Right cardiac atrium (tissue), 5 donors: ENCODE measurements at regions of chr7 and their contacts with region 1.

Region 1: DNA sequence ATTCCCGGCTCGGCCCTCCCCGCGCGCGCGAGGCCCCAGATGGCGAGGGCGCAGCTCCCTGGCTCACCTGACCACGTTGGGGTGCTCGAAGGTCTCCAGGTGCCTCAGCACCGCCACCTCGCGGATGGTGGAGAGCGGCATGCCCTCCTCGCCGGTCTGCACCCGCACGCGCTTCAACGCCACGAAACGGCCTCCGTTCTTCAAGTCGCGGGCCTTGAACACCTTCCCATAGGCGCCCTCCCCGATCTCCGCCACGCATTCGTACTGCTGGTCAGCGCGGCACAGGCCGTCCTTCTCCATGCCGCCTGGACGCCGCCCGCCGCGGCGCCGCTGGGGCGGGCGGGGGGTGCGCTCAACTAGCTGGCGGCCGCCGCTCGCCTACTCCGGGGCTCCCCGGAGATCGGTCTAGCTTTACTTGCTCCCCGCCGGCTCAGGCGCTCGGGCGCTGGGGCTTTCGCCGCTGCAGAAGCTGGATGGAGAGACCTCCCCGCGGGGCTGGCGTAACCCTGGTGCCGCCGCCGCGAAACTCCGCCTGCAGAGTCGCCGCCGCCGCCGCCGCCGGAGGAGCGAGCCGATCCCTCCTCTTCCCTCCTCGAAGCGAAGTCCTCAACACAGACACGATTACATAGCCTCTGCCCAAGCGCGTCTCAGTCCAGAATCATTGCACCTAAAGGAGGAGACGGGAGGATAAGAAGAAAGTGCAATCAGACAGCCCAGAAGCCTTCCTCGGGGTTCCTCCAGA is 3.2 kb downstream of the CDK6 start:
- DNase-seq: peak; percentile 81 to 94 (median 94)
- ATAC-seq: peak; percentile 79 to 82
- H3K4me3 ChIP-seq: peak overlapping the region; percentile 60
- H3K27ac ChIP-seq: peak overlapping the region; percentile 90
- H3K4me1 ChIP-seq: no peaks in the 10 kb centered on the region
- H3K27me3 ChIP-seq: no peaks in the 10 kb centered on the region

Region 2: DNA sequence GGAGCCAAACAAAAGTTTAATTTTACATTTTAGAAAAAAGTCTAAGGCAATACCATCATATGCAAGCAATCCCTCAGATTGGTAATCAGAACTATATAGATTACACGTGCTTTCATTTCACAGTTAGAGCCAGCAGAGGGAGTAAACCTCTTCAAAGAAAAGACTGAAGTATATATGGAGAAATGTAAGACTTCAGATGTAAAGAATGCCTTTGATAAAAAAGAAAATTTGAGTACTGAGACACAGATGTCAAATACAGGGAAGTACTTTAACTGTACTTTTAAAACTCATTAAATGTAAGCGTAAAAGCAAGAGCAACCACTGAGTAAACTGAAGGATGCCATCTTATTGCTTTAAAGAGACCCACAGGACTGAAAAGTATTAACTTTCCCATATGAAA is 141.6 kb before region 1 on chr7:
- intact Hi-C with region 1: loop called (anchors 5 to 10 kb)
- DNase-seq: no peak
- ATAC-seq: no peak
- H3K4me3 ChIP-seq: no peak overlapping the region
- H3K27ac ChIP-seq: no peak overlapping the region
- H3K4me1 ChIP-seq: no peaks in the 10 kb centered on the region
- H3K27me3 ChIP-seq: no peaks in the 10 kb centered on the region

Region 3: GRCh38 chr7:92781117-92781720 is 52.0 kb before region 1 on chr7:
- intact Hi-C with region 1: loop called in 2 of 4 experiments (anchors 5 to 10 kb)
- DNase-seq: peak in 1 of 3 donors; percentile 63
- ATAC-seq: peak; percentile 72 to 85
- H3K4me3 ChIP-seq: no peak overlapping the region
- H3K27ac ChIP-seq: no peak overlapping the region
- H3K4me1 ChIP-seq: peaks cover 10% of the 10 kb centered on the region
- H3K27me3 ChIP-seq: no peaks in the 10 kb centered on the region

Region 4: DNA sequence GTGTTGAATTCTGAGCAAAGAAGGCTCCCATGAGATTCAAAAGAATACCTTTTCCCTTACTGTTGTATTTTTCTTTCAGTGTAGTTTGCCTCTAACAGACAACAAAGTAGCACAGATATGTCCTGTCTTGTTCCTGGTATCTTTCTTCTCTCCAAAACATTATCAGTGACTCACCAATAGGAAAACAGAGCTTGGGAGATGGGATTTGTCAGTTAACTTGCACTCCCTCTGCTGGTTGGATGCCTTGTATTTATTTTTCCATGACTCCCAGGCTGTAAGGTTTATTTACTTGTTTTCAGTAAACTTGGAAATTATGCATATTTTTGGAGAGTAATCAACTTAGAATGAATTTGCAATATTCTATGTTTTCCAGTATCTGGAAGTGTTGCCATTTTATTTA is 154.9 kb after region 1 on chr7:
- intact Hi-C with region 1: no loop called
- DNase-seq: no peak
- ATAC-seq: no peak
- H3K4me3 ChIP-seq: no peak overlapping the region
- H3K27ac ChIP-seq: no peak overlapping the region
- H3K4me1 ChIP-seq: no peaks in the 10 kb centered on the region
- H3K27me3 ChIP-seq: no peaks in the 10 kb centered on the region